GM12878 (cell line): ENCODE measurements at regions of chr4 and their contacts with region 1.

Region 1: GRCh38 chr4:68361146-68361589 is 11.3 kb upstream of the YTHDC1 start:
- DNase-seq: no peak
- ATAC-seq: no peak
- H3K4me3 ChIP-seq: no peak overlapping the region
- H3K27ac ChIP-seq: no peak overlapping the region
- H3K4me1 ChIP-seq: no peaks in the 10 kb centered on the region
- H3K27me3 ChIP-seq: no peaks in the 10 kb centered on the region
- CTCF ChIP-seq: no peak
- EP300 ChIP-seq: no peak
- POLR2A ChIP-seq: no peak
- RAD21 ChIP-seq: no peak

Region 2: DNA sequence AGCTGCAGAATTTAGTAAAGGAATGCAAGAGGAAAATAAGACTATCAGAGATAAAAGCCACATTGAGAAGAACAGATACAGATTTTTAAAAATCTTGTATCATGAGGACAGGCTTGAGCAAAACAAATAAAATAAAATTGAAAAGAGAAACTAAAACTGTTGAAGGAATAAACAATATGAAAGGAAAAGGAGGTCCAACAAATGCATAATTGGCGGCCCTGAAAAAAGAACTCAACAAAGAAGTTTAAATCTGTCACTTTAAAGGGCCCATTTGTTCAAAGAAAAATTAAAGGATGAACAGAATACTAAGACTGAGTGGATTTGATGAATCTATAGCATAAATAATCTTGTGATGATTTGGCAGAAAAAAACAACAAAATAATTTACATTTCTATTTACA is 152.2 kb before region 1 on chr4:
- CTCF ChIA-PET with region 1: no interaction called
- POLR2A ChIA-PET with region 1: no interaction called
- RAD21 ChIA-PET with region 1: no interaction called
- SMC1A ChIA-PET with region 1: no interaction called
- in situ Hi-C with region 1: no loop called
- intact Hi-C with region 1: no loop called
- DNase-seq: no peak
- ATAC-seq: no peak
- H3K4me3 ChIP-seq: no peak overlapping the region
- H3K27ac ChIP-seq: no peak overlapping the region
- H3K4me1 ChIP-seq: no peaks in the 10 kb centered on the region
- H3K27me3 ChIP-seq: no peaks in the 10 kb centered on the region
- CTCF ChIP-seq: no peak
- EP300 ChIP-seq: no peak
- POLR2A ChIP-seq: no peak
- RAD21 ChIP-seq: no peak

Region 3: DNA sequence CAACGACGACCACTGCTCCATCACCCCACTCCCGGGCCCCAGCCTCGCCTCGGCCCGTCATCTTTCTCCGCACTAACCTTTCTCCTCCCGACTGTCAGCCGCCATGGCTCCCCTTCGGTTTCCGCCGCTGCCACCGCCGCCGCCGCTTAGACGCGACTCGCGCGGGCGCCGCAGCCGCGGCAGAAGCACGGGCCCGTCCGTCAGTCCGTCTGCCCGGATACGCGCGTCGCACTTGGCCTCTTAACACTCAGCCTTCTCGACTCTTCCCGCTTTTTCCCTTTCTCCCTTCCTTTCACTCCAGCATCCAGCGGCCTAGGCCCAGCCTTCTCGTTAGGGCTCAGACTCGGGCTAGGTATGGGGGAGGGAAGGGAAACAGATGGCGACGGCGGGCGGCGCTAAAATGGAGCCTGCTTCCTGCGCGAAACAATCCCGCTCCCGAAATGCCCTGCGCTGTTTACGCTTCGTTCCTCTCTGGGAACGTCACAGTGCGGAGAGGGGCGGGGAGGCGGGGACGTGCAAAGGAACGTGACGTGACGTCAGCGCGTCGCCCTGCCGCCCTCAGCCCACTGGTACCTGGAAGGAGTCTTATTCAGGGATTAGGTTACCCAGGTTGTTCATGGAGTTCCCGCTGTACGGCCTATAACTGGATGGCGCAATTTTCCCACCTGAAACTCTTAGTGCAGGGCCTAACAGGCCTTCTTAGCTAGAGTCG is 11.4 kb before region 1 on chr4 and contains the start of gene YTHDC1:
- CTCF ChIA-PET with region 1: no interaction called
- POLR2A ChIA-PET with region 1: interaction called, 4 read pairs
- RAD21 ChIA-PET with region 1: no interaction called
- SMC1A ChIA-PET with region 1: interaction called, 12 read pairs
- in situ Hi-C with region 1: no loop called
- intact Hi-C with region 1: no loop called
- DNase-seq: peak; percentile 81
- ATAC-seq: peak; percentile 93
- H3K4me3 ChIP-seq: peak within 1 kb of the TSS; percentile 84
- H3K27ac ChIP-seq: peak within 1 kb of the TSS; percentile 97
- H3K4me1 ChIP-seq: no peaks in the 10 kb centered on the region
- H3K27me3 ChIP-seq: no peaks in the 10 kb centered on the region
- CTCF ChIP-seq: no peak
- EP300 ChIP-seq: peak in 1 of 2 experiments; percentile 53; a peak in 2 of 4 replicates
- POLR2A ChIP-seq: peak; percentile 99
- RAD21 ChIP-seq: no peak
- polyA plus RNA-seq, gene YTHDC1: 18.7 to 22.7 TPM